ENCODE measurements at regions of chrX and their contacts with region 1.

Region 1: DNA sequence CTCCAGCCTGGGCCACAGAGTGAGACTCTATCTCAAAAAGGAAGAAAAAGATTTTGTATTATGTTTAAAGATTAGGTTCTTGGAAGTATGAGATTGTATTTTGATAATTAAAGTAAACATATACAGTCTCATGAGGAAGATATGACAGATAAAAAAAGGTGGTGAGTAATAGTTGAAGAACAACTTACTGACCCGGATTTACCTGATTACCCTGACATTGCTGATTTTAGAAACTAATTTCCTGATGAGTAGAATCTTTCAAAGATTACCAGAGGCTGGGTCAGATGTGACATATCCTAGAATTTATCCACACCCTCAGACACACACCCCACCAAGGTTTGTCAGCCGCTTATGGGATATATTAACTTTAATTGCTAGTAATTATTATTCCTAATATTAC is 9.5 kb downstream of the CDKL5 start:
- DNase-seq: no peak
- H3K4me3 Mint-ChIP-seq: no peak overlapping the region
- H3K27ac Mint-ChIP-seq: no peak overlapping the region
- H3K4me1 Mint-ChIP-seq: peaks cover 14% of the 10 kb centered on the region
- H3K27me3 Mint-ChIP-seq: no peaks in the 10 kb centered on the region
- CTCF ChIP-seq: no peak

Region 2: GRCh38 chrX:18549643-18550042 is 114.7 kb after region 1 on chrX:
- CTCF ChIA-PET with region 1: no interaction called
- intact Hi-C with region 1: loop called (anchors 10 kb)
- DNase-seq: no peak
- H3K4me3 Mint-ChIP-seq: no peak overlapping the region
- H3K27ac Mint-ChIP-seq: no peak overlapping the region
- H3K4me1 Mint-ChIP-seq: peaks cover 26% of the 10 kb centered on the region
- H3K27me3 Mint-ChIP-seq: no peaks in the 10 kb centered on the region
- CTCF ChIP-seq: no peak

Region 3: GRCh38 chrX:18748499-18748898 is 313.6 kb after region 1 on chrX:
- CTCF ChIA-PET with region 1: no interaction called
- intact Hi-C with region 1: no loop called
- DNase-seq: no peak
- H3K4me3 Mint-ChIP-seq: no peak overlapping the region
- H3K27ac Mint-ChIP-seq: no peak overlapping the region
- H3K4me1 Mint-ChIP-seq: no peaks in the 10 kb centered on the region
- H3K27me3 Mint-ChIP-seq: peaks cover 9% of the 10 kb centered on the region
- CTCF ChIP-seq: no peak

Measured in Calu3 (cell line).